MCF 10A (cell line): ENCODE measurements at regions of chr7 and their contacts with region 1.

Region 1: DNA sequence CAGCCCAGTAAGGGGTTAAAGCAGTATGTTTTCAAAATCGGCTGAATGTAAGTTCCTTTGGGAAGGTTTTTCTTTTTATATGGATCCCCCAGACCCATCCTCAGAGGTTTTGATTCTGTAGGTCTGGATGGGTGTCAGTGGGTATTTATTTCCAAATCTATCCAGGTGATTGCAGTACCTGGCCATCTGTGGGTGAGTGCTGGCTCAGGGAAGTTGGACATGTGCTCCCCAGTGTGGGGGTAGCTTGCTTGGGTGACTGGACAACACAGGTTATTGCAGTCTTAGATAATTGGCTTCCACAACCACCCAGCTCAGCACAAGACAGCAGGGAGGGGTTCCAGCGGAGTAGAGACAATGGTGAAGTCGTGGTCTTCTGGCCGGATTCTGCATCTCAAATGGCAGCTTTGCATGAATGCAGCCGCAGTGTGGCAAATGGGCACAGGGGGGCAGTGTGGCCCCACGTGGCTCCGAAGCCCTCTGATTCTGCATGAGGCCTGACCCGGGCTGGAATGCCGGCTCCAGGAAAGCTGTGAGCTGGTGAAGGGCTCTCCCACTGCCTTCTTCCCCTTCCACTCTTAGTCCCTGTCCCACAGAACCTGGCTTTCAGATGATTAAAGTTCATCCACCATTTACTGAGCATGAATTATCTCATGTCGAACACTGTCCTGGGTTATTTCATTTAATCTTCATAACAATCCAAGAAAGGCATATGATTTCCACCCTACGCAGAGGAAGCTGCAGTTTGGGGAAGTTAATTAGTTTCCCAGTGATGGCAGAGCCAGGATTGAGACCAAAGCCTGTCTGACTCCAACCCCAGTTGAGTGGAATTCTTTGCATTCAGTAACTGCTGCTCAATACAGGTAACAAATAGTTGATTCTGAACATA is 64.5 kb upstream of the SYPL1 start:
- DNase-seq: peak; percentile 79
- H3K4me3 Mint-ChIP-seq: no peak overlapping the region
- H3K27ac Mint-ChIP-seq: no peak overlapping the region
- H3K4me1 Mint-ChIP-seq: peaks cover 16% of the 10 kb centered on the region
- H3K27me3 Mint-ChIP-seq: peaks cover 11% of the 10 kb centered on the region
- CTCF ChIP-seq: peak; percentile 92

Region 2: DNA sequence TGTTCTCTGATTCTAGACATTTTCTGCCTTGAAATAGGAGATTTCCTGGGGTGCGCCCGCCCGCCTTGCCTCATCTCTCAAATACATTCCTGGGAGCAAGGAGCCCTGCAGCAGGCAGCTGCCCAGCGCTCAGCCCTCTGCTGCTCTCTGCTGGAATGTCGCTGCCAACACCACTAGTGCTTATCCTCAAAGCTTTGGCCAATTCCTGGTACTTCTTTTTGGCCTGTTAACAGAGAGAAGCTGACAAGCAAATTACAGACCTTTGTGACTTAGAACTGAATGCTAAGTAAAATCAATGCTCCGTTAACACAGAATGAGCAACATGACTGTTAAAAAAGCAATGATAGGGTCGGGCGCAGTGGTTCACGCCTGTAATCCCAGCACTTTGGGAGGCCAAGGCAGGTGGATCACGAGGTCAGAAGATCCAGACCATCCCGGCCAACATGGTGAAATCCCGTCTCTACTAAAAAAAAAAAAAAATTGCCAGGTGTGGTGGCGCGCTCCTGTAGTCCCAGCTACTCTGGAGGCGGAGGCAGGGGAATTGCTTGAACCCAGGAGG is 22.7 kb before region 1 on chr7:
- CTCF ChIA-PET with region 1: interaction called, 113 read pairs
- POLR2A ChIA-PET with region 1: no interaction called
- intact Hi-C with region 1: no loop called
- DNase-seq: peak; percentile 86
- H3K4me3 Mint-ChIP-seq: no peak overlapping the region
- H3K27ac Mint-ChIP-seq: no peak overlapping the region
- H3K4me1 Mint-ChIP-seq: no peaks in the 10 kb centered on the region
- H3K27me3 Mint-ChIP-seq: peaks cover 18% of the 10 kb centered on the region
- CTCF ChIP-seq: peak; percentile 92

Region 3: DNA sequence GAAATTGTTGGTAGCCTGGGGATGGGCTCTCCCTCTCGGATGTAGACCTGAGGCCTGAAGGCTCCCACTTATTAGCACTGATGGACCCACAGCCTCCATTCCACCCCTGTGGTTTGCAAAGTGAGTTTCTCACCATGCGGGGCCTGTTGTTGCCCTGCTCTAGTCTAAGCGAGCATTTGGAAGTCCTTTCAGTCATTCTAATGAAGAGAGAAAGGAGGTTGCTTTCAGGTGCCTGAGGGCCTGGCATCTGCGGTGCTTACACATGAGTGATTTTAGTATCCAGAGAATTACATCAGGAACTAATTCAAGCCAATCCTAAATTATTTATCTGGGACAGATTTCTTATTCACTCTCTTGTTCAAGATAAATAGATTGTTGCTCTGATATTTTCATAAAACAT is 46.5 kb after region 1 on chr7:
- CTCF ChIA-PET with region 1: interaction called, 24 read pairs
- POLR2A ChIA-PET with region 1: no interaction called
- intact Hi-C with region 1: no loop called
- DNase-seq: no peak
- H3K4me3 Mint-ChIP-seq: no peak overlapping the region
- H3K27ac Mint-ChIP-seq: no peak overlapping the region
- H3K4me1 Mint-ChIP-seq: peaks cover 8% of the 10 kb centered on the region
- H3K27me3 Mint-ChIP-seq: no peaks in the 10 kb centered on the region
- CTCF ChIP-seq: no peak

Region 4: DNA sequence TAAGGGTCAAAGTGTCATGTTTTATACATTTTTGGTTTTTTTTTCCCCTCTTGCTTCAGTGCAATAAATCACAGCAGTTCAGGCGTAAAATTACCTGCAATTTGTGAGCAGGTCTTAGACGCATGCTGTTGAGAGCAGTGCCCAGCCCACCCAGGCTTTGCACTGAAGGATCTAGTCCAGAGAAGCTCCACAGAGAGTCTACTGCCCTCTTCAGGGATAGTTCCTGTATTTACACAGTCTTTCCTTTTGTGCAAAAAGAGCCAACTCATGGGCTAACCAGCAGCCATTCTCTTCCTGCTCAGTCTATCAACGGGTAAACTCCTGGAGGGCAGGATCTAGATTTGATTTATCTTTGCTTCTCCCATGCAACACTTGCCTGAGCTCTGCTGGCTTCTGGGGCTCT is 190.4 kb after region 1 on chr7:
- CTCF ChIA-PET with region 1: no interaction called
- POLR2A ChIA-PET with region 1: no interaction called
- intact Hi-C with region 1: loop called (anchors 5 kb)
- DNase-seq: peak; percentile 46
- H3K4me3 Mint-ChIP-seq: no peak overlapping the region
- H3K27ac Mint-ChIP-seq: no peak overlapping the region
- H3K4me1 Mint-ChIP-seq: peaks cover 7% of the 10 kb centered on the region
- H3K27me3 Mint-ChIP-seq: no peaks in the 10 kb centered on the region
- CTCF ChIP-seq: peak; percentile 21

Region 5: DNA sequence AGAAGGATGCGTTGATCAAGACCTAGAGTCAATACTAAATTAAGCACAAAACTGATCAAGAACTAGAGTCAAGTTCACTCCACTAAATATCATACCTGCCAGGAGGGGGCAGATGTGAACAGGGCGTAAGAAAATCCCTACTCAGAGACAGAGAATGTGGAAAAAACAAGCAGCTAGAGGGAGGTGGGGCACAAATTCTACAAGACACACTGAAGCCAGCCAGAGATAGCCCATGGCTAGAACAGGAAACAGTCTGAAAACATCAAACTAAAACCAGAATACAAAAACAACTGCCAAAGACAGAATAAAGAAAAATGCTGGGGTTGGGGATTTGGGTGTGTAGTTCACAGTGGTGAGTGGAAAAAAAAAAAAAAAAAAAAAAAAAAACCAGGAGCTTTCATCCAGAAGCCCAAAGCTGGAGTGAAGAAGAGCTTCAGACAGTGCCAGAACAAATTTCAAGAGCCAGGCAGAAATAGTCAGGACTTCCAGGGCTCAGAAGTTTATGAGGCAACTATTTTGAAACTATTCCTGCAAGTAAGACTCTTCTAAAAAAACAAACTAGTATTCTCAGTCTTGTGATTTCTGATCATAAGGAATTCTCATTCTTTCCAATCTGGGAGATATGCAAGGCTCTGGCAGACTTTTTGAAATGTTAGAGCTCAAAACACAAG is 366.0 kb after region 1 on chr7:
- CTCF ChIA-PET with region 1: interaction called, 27 read pairs
- POLR2A ChIA-PET with region 1: no interaction called
- intact Hi-C with region 1: loop called (anchors 5 kb)
- DNase-seq: peak; percentile 88
- H3K4me3 Mint-ChIP-seq: no peak overlapping the region
- H3K27ac Mint-ChIP-seq: peak overlapping the region; percentile 59
- H3K4me1 Mint-ChIP-seq: peaks cover 6% of the 10 kb centered on the region
- H3K27me3 Mint-ChIP-seq: no peaks in the 10 kb centered on the region
- CTCF ChIP-seq: peak; percentile 63

Region 6: DNA sequence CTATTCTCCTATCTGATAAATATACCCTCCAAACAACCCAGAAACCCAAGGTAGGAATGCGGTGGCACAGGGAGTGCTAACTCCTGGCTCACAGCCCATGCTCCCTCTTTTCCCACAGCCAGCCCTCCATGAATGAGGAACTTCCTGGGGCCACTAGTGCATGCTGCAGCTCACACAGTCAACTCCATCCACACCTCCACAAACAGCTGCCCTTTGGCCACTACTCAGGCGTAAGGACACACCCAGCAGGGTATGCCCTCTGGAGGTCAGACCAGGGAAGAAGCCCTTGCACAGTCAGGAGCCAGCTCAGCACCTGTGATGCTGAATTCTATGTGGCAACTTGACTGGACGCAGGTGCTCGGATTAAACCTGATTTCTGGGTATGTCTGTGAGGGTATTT is 603.2 kb after region 1 on chr7:
- CTCF ChIA-PET with region 1: no interaction called
- POLR2A ChIA-PET with region 1: no interaction called
- intact Hi-C with region 1: loop called (anchors 1 kb)
- DNase-seq: peak; percentile 35
- H3K4me3 Mint-ChIP-seq: no peak overlapping the region
- H3K27ac Mint-ChIP-seq: no peak overlapping the region
- H3K4me1 Mint-ChIP-seq: peaks cover 16% of the 10 kb centered on the region
- H3K27me3 Mint-ChIP-seq: no peaks in the 10 kb centered on the region
- CTCF ChIP-seq: no peak